ENCODE measurements at regions of chr18 and their contacts with region 1.

Region 1: DNA sequence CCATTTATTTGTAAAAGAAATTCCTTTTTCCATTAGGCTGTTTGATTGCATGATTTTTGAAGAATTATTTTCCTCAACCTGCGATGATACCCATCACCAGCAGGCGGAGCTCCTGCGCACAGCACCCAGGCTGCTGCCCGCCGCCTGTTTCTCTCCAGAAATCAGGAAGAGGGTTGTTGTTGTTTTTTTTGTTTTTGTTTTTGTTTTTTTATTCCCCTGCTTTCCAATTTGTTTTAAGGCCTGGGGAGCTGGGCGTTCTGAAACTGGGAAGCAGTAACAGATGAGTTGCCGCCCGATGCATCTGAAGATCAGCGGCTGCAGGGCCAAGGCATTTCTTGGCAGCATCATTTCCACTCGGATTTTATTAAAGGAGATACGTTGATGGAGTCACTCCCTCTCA is 132.1 kb downstream of the MBP start:
- DNase-seq: peak; percentile 82
- H3K4me3 ChIP-seq: no peak overlapping the region; a peak in 1 of 4 replicates
- H3K27ac ChIP-seq: no peak overlapping the region
- H3K4me1 ChIP-seq: no peaks in the 10 kb centered on the region
- H3K27me3 ChIP-seq: peaks cover 4% of the 10 kb centered on the region; the same call in 1 of the 2 replicates
- CTCF ChIP-seq: peak; percentile 99
- EP300 ChIP-seq: no peak
- RAD21 ChIP-seq: peak; percentile 85

Region 2: GRCh38 chr18:76803814-76804213 is 196.7 kb before region 1 on chr18:
- CTCF ChIA-PET with region 1: interaction called, 13 read pairs
- POLR2A ChIA-PET with region 1: no interaction called
- DNase-seq: peak; percentile 77
- H3K4me3 ChIP-seq: peak overlapping the region in 1 of 2 experiments; percentile 38; a peak in 1 of 4 replicates
- H3K27ac ChIP-seq: no peak overlapping the region
- H3K4me1 ChIP-seq: peaks cover 0 to 7% of the 10 kb centered on the region in 2 experiments; a peak in 2 of 4 replicates
- H3K27me3 ChIP-seq: no peaks in the 10 kb centered on the region
- CTCF ChIP-seq: peak; percentile 85
- EP300 ChIP-seq: no peak
- RAD21 ChIP-seq: peak; percentile 64

Region 3: DNA sequence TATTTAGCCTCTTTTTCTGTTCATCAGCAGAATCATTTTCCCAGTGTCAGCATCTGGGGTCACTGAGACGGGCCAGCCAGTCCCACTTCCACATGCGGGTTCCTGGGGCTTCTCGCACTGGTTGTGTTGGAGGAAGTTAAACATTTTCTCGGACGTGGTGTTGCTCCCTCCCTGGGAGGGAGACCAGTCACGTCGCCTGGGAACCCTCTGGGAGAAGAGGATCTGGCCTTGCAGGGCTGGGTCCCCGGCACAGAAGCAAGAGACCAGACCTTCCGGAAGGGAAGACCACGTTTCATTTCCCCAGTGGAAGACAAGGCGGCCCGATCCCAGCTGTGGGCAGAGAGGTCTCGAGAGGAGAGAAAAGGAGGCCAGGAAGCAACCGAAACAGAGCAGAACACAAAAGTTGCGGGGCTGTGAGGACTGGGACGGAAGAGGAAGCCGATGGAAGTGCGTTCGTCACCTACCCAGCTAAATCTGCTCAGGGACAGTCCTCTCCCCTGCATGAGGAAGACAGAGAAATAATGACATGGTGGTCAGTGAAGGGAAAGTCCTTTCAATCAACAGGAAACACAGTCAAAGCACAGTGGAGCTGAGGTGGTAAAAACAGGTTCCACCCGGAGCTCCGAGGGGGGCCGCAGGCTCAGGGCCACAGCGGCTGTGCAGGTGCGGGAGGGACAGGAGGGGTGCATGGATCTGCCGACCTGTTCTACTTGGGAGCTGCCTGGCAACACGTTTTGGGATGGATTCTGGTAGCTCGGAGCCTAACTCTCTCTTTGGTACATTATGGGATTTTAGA is 12.3 kb before region 1 on chr18:
- CTCF ChIA-PET with region 1: interaction called, 87 read pairs
- POLR2A ChIA-PET with region 1: no interaction called
- DNase-seq: no peak
- H3K4me3 ChIP-seq: no peak overlapping the region
- H3K27ac ChIP-seq: no peak overlapping the region
- H3K4me1 ChIP-seq: peaks cover 0 to 10% of the 10 kb centered on the region in 2 experiments; a peak in 1 of 4 replicates
- H3K27me3 ChIP-seq: no peaks in the 10 kb centered on the region
- CTCF ChIP-seq: no peak
- EP300 ChIP-seq: no peak
- RAD21 ChIP-seq: no peak

Region 4: GRCh38 chr18:77032181-77032701 is 31.7 kb after region 1 on chr18:
- CTCF ChIA-PET with region 1: interaction called, 13 read pairs
- POLR2A ChIA-PET with region 1: no interaction called
- DNase-seq: no peak
- H3K4me3 ChIP-seq: no peak overlapping the region
- H3K27ac ChIP-seq: no peak overlapping the region
- H3K4me1 ChIP-seq: no peaks in the 10 kb centered on the region; a peak in 1 of 4 replicates
- H3K27me3 ChIP-seq: no peaks in the 10 kb centered on the region
- CTCF ChIP-seq: no peak
- EP300 ChIP-seq: no peak
- RAD21 ChIP-seq: no peak

Region 5: GRCh38 chr18:77207540-77207939 is 207.0 kb after region 1 on chr18:
- CTCF ChIA-PET with region 1: interaction called, 40 read pairs
- POLR2A ChIA-PET with region 1: no interaction called
- DNase-seq: peak; percentile 64
- H3K4me3 ChIP-seq: no peak overlapping the region
- H3K27ac ChIP-seq: no peak overlapping the region
- H3K4me1 ChIP-seq: no peaks in the 10 kb centered on the region; a peak in 1 of 4 replicates
- H3K27me3 ChIP-seq: no peaks in the 10 kb centered on the region
- CTCF ChIP-seq: peak; percentile 63
- EP300 ChIP-seq: no peak
- RAD21 ChIP-seq: no peak

Measured in SK-N-SH (cell line).